Psoas muscle (tissue), 8 donors: ENCODE measurements at regions of chr9 and their contacts with region 1.

Region 1: DNA sequence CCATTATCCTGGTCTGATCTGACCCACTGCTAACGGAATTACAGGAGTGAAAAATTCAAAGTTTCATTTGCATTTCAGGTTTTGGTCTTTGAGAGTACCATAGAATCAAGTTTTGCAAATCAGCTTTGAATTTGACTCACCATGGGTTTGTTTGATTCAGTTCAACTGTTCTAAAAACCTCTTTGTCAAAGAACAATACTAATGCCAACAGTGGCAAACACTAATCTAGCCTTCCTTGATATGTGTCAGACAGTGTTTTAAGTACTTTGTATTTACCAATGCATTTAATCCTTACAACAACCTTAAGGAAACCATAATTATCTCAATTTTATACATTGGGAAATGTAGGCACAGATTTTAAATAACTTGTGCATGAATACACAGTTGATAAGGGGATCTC is 10.1 kb upstream of the FSD1L start:
- DNase-seq: no peak
- ATAC-seq: no peak
- H3K4me3 ChIP-seq: no peak overlapping the region
- H3K27ac ChIP-seq: peak overlapping the region; percentile 96
- H3K4me1 ChIP-seq: peaks cover 51% of the 10 kb centered on the region
- H3K27me3 ChIP-seq: no peaks in the 10 kb centered on the region
- CTCF ChIP-seq: no peak

Region 2: GRCh38 chr9:105457560-105458294 is 20.0 kb after region 1 on chr9:
- intact Hi-C with region 1: loop called in 1 of 2 experiments (anchors 2 kb)
- DNase-seq: peak; percentile 56 to 80
- ATAC-seq: peak; percentile 91 to 92 (median 92)
- H3K4me3 ChIP-seq: peak overlapping the region; percentile 64
- H3K27ac ChIP-seq: peak overlapping the region; percentile 96
- H3K4me1 ChIP-seq: peaks cover 38% of the 10 kb centered on the region
- H3K27me3 ChIP-seq: no peaks in the 10 kb centered on the region
- CTCF ChIP-seq: no peak